Right lobe of liver (tissue), 6 donors: ENCODE measurements at regions of chr3 and their contacts with region 1.

Region 1: DNA sequence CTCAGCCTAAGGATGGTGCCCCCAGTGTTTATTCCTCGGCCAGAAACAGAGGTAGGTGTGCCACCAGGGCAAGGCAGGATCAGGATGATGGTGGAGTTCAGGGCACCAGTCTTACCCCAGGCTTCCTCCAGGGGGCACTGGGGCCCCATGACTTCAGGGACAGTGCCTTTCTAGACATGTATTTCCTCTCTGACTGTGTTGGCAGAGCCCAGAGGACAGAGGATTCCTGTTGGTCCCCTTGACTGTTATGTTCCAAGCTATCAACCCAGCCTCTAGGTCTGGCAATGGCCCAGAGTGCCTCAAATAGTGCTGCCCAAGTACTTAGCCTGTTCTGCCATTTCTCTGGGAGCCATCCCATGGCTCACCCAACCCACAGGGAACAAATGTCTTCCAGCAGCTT is 2.8 kb downstream of the HEMK1 start:
- DNase-seq: peak; percentile 78 to 82 (median 82)
- ATAC-seq: peak; percentile 63 to 72 (median 68)
- H3K4me3 ChIP-seq: no peak overlapping the region
- H3K27ac ChIP-seq: peak overlapping the region in 2 of 3 donors; percentile 28 to 30
- H3K4me1 ChIP-seq: peaks cover 0 to 35% (median 13%) of the 10 kb centered on the region in 4 donors
- H3K27me3 ChIP-seq: no peaks in the 10 kb centered on the region
- CTCF ChIP-seq: peak; percentile 94 to 98 (median 96)
- POLR2A ChIP-seq: no peak

Region 2: GRCh38 chr3:50474717-50475116 is 97.4 kb before region 1 on chr3:
- intact Hi-C with region 1: no loop called
- DNase-seq: no peak
- ATAC-seq: peak in 2 of 4 donors; percentile 5 to 55
- H3K4me3 ChIP-seq: no peak overlapping the region
- H3K27ac ChIP-seq: peak overlapping the region in 1 of 3 donors; percentile 28
- H3K4me1 ChIP-seq: peaks cover 0 to 11% (median 2%) of the 10 kb centered on the region in 4 donors
- H3K27me3 ChIP-seq: no peaks in the 10 kb centered on the region
- CTCF ChIP-seq: no peak
- POLR2A ChIP-seq: no peak

Region 3: GRCh38 chr3:50611464-50612233 is 39.5 kb after region 1 on chr3 and contains the start of gene CISH:
- intact Hi-C with region 1: loop called (anchors 2 to 5 kb)
- DNase-seq: peak; percentile 96 to 98 (median 97)
- ATAC-seq: peak; percentile 66 to 84 (median 80)
- H3K4me3 ChIP-seq: peak within 1 kb of the TSS; percentile 87 to 94 (median 93)
- H3K27ac ChIP-seq: peak within 1 kb of the TSS; percentile 72 to 97 (median 83)
- H3K4me1 ChIP-seq: peaks cover 0 to 48% (median 20%) of the 10 kb centered on the region in 4 donors
- H3K27me3 ChIP-seq: no peaks in the 10 kb centered on the region
- CTCF ChIP-seq: peak in 1 of 4 donors; percentile 15
- POLR2A ChIP-seq: peak; percentile 95
- total RNA-seq, gene CISH: 5.3 to 28.1 (median 17.8) TPM